Panc1 (cell line): ENCODE measurements at regions of chr7 and their contacts with region 1.

Region 1: DNA sequence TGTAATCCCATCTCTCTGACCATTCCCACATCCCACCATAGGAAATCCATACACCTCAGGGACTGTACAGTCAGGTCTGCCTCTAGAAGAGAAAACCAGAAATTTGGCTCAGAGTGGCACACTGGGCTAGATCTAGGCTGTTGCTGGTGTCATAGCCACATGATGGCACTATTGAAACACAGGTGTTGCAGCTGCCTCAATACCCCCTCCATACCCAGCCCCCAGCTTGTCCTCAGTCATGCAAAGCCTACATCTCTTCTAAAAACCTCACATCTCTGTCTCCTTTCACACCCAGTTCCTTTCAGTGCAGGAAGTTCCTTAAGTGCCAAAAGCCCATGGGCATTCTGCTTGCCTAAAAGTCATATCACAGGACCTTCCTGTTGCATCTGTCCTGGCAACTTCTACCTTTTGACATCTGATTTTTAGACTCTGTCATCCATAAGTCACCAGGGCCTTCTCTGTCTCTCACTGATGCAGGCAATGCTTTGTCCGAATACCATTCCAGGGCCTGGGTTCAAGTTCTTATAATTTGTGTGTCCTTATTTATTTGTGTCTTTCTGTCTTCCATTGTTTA is 27.0 kb upstream of the HIBADH start:
- DNase-seq: no peak
- ATAC-seq: peak; percentile 94
- H3K4me3 ChIP-seq: no peak overlapping the region
- H3K27ac ChIP-seq: no peak overlapping the region
- H3K4me1 ChIP-seq: no peaks in the 10 kb centered on the region
- H3K27me3 ChIP-seq: no peaks in the 10 kb centered on the region
- CTCF ChIP-seq: peak; percentile 84

Region 2: DNA sequence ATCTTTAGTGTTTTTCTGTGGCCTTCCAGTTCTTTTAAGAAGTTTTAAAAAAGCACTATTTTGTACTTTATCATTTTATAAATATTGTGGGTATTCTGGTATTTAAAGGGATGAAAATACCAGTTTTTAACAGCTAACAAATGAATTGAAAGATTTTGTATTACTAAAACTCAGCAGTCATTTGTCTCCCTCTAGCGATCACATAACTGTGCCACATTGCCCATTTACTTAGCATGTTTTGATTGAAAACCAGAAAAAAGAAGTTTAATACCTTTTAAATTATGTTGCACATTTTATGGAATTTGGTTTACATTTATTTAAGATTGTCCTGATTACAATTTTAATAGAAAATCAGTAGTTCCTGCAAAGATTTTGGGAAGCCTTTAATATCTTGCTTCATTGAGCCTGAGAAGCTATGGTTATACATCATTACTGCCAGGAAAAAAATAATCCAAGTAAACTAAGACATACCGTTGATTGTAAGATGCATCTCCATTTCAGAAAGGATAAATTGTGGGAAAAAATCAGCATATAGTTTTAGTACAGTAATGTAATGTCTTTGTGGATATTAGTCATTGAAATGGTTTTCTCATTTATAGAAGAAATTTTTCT is 85.1 kb after region 1 on chr7:
- CTCF ChIA-PET with region 1: no interaction called
- POLR2A ChIA-PET with region 1: no interaction called
- in situ Hi-C with region 1: no loop called
- intact Hi-C with region 1: loop called (anchors 5 kb)
- DNase-seq: peak; percentile 13
- ATAC-seq: no peak
- H3K4me3 ChIP-seq: no peak overlapping the region
- H3K27ac ChIP-seq: no peak overlapping the region
- H3K4me1 ChIP-seq: no peaks in the 10 kb centered on the region; the same call in 1 of the 2 replicates
- H3K27me3 ChIP-seq: no peaks in the 10 kb centered on the region
- CTCF ChIP-seq: peak; percentile 81; the same call in 1 of the 2 replicates

Region 3: DNA sequence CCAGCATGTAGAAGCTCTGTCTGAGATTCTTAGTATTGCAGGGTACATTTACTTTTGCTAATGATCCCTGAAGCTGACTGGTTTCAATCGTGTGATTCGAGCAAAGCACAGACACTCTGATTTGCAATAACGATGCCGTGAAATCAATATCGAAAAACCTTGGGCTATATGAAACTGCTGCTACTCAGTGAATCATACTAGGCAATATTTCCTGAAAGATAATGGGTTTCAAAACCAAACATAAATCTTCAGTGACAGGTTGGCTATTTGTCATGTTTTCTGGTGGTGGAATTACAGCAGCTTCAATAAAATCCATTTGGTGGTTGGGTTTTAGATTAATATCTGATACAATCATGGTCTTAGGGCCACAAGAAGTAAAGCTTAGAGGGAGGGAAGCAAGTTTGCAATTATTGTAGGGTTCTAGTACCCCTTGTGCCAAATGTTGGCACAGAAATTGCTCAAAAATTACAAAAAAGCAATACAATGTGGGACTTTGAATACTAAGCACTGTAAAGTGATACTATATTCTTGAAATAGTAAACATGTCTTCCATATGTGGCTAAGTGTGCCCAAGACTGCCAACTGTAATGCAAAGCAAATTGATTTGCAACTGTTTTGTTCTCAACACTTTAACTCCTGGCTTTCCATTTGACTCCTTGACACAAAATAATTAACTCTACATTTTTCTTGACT is 603.3 kb after region 1 on chr7:
- CTCF ChIA-PET with region 1: no interaction called
- POLR2A ChIA-PET with region 1: no interaction called
- in situ Hi-C with region 1: no loop called
- intact Hi-C with region 1: no loop called
- DNase-seq: no peak
- ATAC-seq: 0 out of 2 replicates have a peak, but pooled peaks have one; percentile 29
- H3K4me3 ChIP-seq: no peak overlapping the region
- H3K27ac ChIP-seq: no peak overlapping the region
- H3K4me1 ChIP-seq: no peaks in the 10 kb centered on the region
- H3K27me3 ChIP-seq: no peaks in the 10 kb centered on the region
- CTCF ChIP-seq: no peak